ENCODE measurements at regions of chr16 and their contacts with region 1.

Region 1: GRCh38 chr16:81035398-81035974 is at the start of gene ATMIN:
- DNase-seq: peak; percentile 88
- ATAC-seq: peak; percentile 94
- H3K4me3 Mint-ChIP-seq: peak within 1 kb of the TSS; percentile 80
- H3K27ac Mint-ChIP-seq: peak within 1 kb of the TSS; percentile 76
- H3K4me1 Mint-ChIP-seq: peaks cover 26% of the 10 kb centered on the region
- H3K27me3 Mint-ChIP-seq: no peaks in the 10 kb centered on the region
- total RNA-seq, gene ATMIN: 23.3 to 27.0 TPM

Region 2: GRCh38 chr16:80899809-80900592 is 135.5 kb before region 1 on chr16:
- CTCF ChIA-PET with region 1: no interaction called
- POLR2A ChIA-PET with region 1: no interaction called
- DNase-seq: no peak
- ATAC-seq: no peak
- H3K4me3 Mint-ChIP-seq: no peak overlapping the region
- H3K27ac Mint-ChIP-seq: no peak overlapping the region
- H3K4me1 Mint-ChIP-seq: no peaks in the 10 kb centered on the region
- H3K27me3 Mint-ChIP-seq: no peaks in the 10 kb centered on the region

Region 3: GRCh38 chr16:80948886-80949493 is 86.5 kb before region 1 on chr16:
- CTCF ChIA-PET with region 1: no interaction called
- POLR2A ChIA-PET with region 1: no interaction called
- DNase-seq: peak; percentile 26
- ATAC-seq: no peak
- H3K4me3 Mint-ChIP-seq: no peak overlapping the region
- H3K27ac Mint-ChIP-seq: no peak overlapping the region
- H3K4me1 Mint-ChIP-seq: no peaks in the 10 kb centered on the region
- H3K27me3 Mint-ChIP-seq: no peaks in the 10 kb centered on the region

Region 4: GRCh38 chr16:80964351-80964750 is 71.1 kb before region 1 on chr16:
- CTCF ChIA-PET with region 1: no interaction called
- POLR2A ChIA-PET with region 1: no interaction called
- DNase-seq: no peak
- ATAC-seq: no peak
- H3K4me3 Mint-ChIP-seq: no peak overlapping the region
- H3K27ac Mint-ChIP-seq: no peak overlapping the region
- H3K4me1 Mint-ChIP-seq: no peaks in the 10 kb centered on the region
- H3K27me3 Mint-ChIP-seq: no peaks in the 10 kb centered on the region

Region 5: GRCh38 chr16:80997139-80997798 is 38.2 kb before region 1 on chr16:
- CTCF ChIA-PET with region 1: interaction called, 54 read pairs
- POLR2A ChIA-PET with region 1: no interaction called
- DNase-seq: no peak
- ATAC-seq: peak; percentile 65
- H3K4me3 Mint-ChIP-seq: peak overlapping the region; percentile 76
- H3K27ac Mint-ChIP-seq: peak overlapping the region; percentile 92
- H3K4me1 Mint-ChIP-seq: peaks cover 48% of the 10 kb centered on the region
- H3K27me3 Mint-ChIP-seq: no peaks in the 10 kb centered on the region

Region 6: DNA sequence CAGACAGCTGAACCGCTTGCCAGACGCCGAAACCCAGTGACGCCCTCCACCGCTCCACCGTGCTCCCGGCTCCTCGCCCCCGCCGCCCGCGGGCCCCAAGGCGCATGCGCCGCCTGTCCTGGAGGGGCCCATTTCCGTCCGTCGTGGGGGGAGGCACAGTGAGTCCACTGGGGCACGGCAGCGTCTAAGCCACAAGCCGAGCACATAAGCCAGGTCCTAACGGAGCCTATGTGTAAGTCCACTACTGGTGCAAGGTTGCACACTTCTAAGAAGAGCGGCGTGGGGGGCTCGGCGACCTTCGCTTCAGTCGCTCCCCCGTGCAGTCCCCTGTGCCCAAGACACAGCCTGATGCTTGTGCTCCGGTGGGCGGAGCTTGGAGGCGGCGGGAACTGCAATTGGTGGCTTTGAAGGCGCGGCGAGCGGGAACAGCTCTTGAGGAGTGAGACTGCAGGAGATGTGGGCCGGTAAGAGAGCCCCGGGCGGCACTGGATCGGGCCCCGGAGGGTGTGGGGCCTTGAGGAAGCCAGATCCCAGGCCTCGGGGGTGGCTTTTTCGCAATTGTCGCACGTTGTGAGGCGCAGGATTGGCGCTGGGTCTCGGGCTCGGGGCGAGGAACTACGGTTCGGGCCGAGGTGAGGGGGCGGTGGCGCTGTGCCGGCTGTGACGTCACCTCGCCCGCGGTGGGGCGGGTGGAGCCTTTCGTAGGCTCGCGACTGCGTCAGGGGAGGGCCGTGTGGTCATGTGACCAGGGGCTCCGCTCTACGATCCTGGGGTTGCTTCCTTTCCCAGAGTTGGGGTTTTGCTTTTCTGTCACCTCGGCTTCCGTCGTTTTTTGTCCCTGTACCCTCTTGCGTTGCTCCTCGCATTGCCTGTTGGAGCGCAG is 28.4 kb before region 1 on chr16 and contains the starts of genes CENPN and CMC2:
- CTCF ChIA-PET with region 1: interaction called, 54 read pairs
- POLR2A ChIA-PET with region 1: interaction called, 14 read pairs
- DNase-seq: peak; percentile 98
- ATAC-seq: peak; percentile 87
- H3K4me3 Mint-ChIP-seq: peak within 1 kb of the TSS; percentile 87
- H3K27ac Mint-ChIP-seq: peak within 1 kb of the TSS; percentile 100
- H3K4me1 Mint-ChIP-seq: peaks cover 48% of the 10 kb centered on the region
- H3K27me3 Mint-ChIP-seq: no peaks in the 10 kb centered on the region
- total RNA-seq, gene CENPN: 65.2 to 67.2 TPM
- total RNA-seq, gene CMC2: 95.9 to 108 TPM

Region 7: DNA sequence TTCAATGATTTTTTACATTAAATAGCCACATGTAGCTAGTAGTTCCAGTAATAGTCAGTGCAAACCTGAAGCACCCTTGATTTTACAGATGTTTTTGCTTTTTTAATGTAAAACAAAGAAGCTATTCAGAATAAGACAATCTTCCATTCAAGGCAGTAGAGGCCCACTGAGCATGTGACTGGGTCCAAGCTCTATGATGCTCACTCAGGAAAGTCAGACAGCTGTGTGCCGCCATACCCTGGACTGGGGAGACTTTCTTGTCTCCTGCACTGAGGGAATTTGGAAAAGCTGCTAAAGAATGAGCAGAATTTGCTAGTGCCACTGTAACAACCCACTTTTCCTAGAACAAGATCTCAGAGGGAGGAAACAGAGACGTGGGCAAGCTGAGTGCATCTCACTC is 17.0 kb before region 1 on chr16:
- CTCF ChIA-PET with region 1: interaction called, 40 read pairs
- POLR2A ChIA-PET with region 1: interaction called, 3 read pairs
- DNase-seq: no peak
- ATAC-seq: no peak
- H3K4me3 Mint-ChIP-seq: no peak overlapping the region
- H3K27ac Mint-ChIP-seq: no peak overlapping the region
- H3K4me1 Mint-ChIP-seq: no peaks in the 10 kb centered on the region
- H3K27me3 Mint-ChIP-seq: no peaks in the 10 kb centered on the region

Region 8: DNA sequence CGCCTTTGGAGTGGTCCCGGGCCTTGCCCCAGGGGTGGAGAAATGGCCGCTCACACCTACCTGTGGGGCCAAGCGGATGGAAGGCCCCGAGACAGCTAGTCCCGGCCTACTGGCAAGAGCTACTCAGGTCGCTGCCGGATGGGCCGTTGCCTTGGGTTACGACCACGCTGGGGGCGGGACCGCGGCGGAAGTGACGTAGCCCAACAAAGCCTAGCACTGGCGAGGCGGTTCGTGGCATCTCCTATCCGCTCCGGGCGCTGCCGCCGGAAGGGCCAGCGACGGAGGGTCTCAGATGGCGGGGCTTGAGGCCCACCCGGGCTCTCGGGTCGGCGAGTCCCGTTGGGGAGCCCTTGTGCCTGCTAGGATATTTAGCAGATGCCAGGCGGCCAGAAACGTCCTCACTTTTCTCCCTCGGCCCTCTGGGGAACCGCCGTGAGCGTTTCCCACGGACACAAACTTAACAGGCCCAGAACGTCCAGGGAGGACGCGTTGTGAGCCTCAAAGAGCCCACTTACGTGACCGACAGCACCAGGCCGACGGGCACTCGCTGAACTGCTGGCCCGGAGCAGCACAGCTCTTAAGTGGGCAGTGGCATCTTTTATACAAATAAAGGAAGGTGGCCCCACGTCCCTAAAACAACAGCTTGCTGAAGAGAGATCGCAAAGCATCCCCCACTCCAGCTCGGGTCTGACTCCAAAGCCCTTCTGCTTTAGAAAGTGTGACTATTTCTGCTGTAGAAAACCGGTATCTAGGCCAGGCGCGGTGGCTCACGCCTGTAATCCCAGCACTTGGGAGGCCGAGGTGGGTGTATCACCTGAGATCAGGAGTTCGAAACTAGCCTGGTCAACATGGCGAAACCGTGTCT is 41.8 kb after region 1 on chr16 and contains the start of gene C16orf46:
- CTCF ChIA-PET with region 1: interaction called, 107 read pairs
- POLR2A ChIA-PET with region 1: interaction called, 29 read pairs
- DNase-seq: peak; percentile 98
- ATAC-seq: peak; percentile 90
- H3K4me3 Mint-ChIP-seq: peak within 1 kb of the TSS; percentile 5
- H3K27ac Mint-ChIP-seq: peak within 1 kb of the TSS; percentile 25
- H3K4me1 Mint-ChIP-seq: peaks cover 6% of the 10 kb centered on the region
- H3K27me3 Mint-ChIP-seq: no peaks in the 10 kb centered on the region
- total RNA-seq, gene C16orf46: 0.23 TPM in 1 of 2 experiments, not detected in the other

Region 9: DNA sequence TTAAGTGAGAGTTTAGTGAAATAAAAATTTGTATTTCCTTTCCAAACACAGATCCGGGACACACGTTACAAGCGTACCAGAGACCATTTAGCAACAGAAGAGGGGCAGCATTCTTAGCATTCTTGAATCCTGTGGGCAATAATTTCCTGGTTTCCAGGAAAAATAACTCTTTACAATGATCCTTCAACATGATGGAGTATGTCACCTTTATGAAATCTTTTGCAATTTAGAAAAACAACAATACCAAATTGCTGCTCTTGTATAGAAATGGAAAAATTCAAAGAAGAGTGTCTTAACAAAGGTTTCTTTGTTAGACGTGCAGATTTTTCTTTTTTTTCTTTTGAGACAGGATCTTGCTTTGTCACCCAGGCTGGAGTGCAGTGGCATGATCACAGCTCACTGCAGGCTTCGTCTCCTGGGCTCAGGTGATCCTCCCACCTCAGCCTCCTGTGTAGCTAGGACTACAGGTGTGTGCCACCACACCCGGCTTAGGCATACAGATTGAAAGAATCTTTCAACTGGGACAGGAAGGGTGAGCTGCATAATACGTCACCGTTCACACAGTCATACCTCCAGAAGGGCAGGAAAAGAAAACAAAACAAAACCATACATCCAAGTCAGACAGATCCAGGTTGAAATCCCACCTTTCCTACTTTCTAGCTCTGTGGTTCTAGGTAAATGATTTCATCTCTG is 71.5 kb after region 1 on chr16:
- CTCF ChIA-PET with region 1: no interaction called
- POLR2A ChIA-PET with region 1: no interaction called
- DNase-seq: no peak
- ATAC-seq: no peak
- H3K4me3 Mint-ChIP-seq: no peak overlapping the region
- H3K27ac Mint-ChIP-seq: no peak overlapping the region
- H3K4me1 Mint-ChIP-seq: no peaks in the 10 kb centered on the region
- H3K27me3 Mint-ChIP-seq: peaks cover 4% of the 10 kb centered on the region